Activated T-helper 1 cell treated with anti-CD3 and anti-CD28 coated beads, Interleukin-12 subunit alpha, Interleukin-12 subunit beta, Interleukin-2, Interleukin-4 antibody, amounts not matched to agents 30 ng/mL and 10 ng/mL and 1 ng/mL, durations not matched to agents 14 hours and 24 hours and 36 hours (primary cell): ENCODE measurements at regions of chr14 and their contacts with region 1.

Region 1: GRCh38 chr14:34211732-34212131 is 250.3 kb downstream of the SPTSSA start:
- DNase-seq: no peak
- H3K4me3 Mint-ChIP-seq: peak overlapping the region; percentile 22
- H3K27ac Mint-ChIP-seq: peak overlapping the region; percentile 47
- H3K4me1 Mint-ChIP-seq: peaks cover 22% of the 10 kb centered on the region
- H3K27me3 Mint-ChIP-seq: peaks cover 5% of the 10 kb centered on the region

Region 2: GRCh38 chr14:33986804-33987203 is 224.9 kb before region 1 on chr14:
- intact Hi-C with region 1: no loop called
- DNase-seq: no peak
- H3K4me3 Mint-ChIP-seq: no peak overlapping the region
- H3K27ac Mint-ChIP-seq: no peak overlapping the region
- H3K4me1 Mint-ChIP-seq: peaks cover 17% of the 10 kb centered on the region
- H3K27me3 Mint-ChIP-seq: peaks cover 7% of the 10 kb centered on the region

Region 3: DNA sequence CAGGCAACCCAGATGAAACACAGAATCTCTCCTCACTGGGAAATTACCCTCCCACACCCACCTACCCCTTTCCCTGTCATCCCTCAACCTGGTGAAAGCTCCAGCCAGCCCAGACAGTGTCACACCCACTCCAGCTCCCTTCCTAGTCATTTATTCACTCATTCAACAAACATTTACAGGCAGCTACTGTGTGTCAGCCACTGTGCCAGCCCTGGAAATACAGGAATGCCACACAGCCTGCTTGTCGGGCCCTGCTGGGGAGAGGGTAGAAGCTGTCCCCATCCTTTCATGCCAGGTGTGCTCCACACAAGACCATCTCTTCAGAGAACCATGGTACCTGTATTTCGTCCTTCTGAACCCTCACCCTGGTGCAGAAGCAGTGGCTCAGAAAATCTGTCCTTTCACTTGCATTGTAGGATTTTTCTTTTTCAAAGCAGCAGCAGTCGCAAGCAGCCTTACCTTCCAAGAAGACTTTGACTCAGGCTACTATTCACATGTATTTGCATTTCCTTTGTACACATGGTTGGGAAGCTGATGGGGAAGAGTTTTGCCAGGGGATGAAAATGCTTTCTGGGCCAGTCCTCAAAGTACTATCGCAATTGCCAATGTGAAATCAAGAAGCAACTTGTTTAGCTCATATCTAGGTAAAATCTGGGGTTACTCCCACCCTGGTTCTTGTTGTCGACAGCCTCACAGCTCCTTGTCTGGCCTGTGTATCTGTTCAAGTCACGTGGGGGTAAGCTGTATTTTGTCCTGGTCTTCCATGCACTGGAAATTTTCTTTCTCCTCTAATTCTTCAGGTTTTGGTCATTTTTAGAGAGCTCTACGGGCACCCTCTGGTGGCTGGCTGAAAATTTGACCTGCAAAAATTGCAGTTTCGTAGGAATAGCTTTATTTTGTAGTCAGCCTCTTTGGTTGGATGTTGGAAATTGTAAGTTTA is 113.4 kb before region 1 on chr14:
- intact Hi-C with region 1: loop called (anchors 5 kb)
- DNase-seq: peak; percentile 21
- H3K4me3 Mint-ChIP-seq: no peak overlapping the region
- H3K27ac Mint-ChIP-seq: no peak overlapping the region
- H3K4me1 Mint-ChIP-seq: peaks cover 61% of the 10 kb centered on the region
- H3K27me3 Mint-ChIP-seq: peaks cover 3% of the 10 kb centered on the region

Region 4: DNA sequence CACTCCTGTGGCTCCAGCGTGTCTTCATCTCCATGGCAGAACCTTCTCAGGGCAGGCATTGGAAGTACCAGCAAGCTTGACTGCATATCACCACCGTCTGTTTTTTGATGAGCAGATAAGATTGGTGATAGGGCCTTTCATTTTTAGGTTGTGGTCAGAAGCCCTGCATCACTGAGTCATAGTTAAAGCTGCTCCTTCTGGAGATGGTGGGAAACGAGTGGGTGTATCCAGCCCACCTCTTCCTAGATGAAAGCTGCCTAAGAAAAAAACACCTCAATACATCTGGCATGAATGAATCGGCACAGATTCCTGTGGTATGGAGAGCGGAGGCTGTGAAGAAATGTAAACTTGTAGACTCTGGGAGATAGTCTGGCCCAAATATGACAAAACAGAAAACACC is 12.2 kb before region 1 on chr14:
- intact Hi-C with region 1: loop called (anchors 1 kb)
- DNase-seq: no peak
- H3K4me3 Mint-ChIP-seq: peak overlapping the region; percentile 56
- H3K27ac Mint-ChIP-seq: peak overlapping the region; percentile 63
- H3K4me1 Mint-ChIP-seq: peaks cover 56% of the 10 kb centered on the region
- H3K27me3 Mint-ChIP-seq: no peaks in the 10 kb centered on the region